ENCODE measurements at regions of chr2 and their contacts with region 1.

Region 1: GRCh38 chr2:134169788-134170187 is 84.1 kb upstream of the MGAT5 start:
- DNase-seq: peak; percentile 45
- H3K4me3 Mint-ChIP-seq: no peak overlapping the region
- H3K27ac Mint-ChIP-seq: no peak overlapping the region
- H3K4me1 Mint-ChIP-seq: peaks cover 68% of the 10 kb centered on the region
- H3K27me3 Mint-ChIP-seq: no peaks in the 10 kb centered on the region

Region 2: DNA sequence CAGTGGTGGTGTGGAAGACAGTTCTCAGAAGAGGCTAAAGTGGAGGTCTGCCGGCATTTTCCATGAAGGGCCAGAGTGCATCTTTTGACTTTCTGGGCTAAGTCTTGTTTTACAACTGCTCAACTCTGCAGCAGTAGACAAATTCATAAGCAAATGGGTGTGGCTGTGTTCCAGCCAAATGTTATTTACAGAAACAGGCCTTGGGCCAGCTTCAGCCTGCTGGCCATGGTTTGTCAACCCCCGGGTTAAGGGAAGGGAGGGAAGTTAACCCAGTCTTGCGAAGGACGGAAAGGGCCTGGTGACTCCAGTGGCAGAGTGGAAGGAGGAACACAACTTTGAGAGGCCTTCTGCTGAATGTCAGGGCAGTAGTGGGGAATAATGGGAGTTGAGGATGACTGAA is 567.3 kb before region 1 on chr2:
- CTCF ChIA-PET with region 1: no interaction called
- intact Hi-C with region 1: no loop called
- DNase-seq: no peak
- H3K4me3 Mint-ChIP-seq: no peak overlapping the region
- H3K27ac Mint-ChIP-seq: no peak overlapping the region
- H3K4me1 Mint-ChIP-seq: no peaks in the 10 kb centered on the region
- H3K27me3 Mint-ChIP-seq: peaks cover 3% of the 10 kb centered on the region

Region 3: DNA sequence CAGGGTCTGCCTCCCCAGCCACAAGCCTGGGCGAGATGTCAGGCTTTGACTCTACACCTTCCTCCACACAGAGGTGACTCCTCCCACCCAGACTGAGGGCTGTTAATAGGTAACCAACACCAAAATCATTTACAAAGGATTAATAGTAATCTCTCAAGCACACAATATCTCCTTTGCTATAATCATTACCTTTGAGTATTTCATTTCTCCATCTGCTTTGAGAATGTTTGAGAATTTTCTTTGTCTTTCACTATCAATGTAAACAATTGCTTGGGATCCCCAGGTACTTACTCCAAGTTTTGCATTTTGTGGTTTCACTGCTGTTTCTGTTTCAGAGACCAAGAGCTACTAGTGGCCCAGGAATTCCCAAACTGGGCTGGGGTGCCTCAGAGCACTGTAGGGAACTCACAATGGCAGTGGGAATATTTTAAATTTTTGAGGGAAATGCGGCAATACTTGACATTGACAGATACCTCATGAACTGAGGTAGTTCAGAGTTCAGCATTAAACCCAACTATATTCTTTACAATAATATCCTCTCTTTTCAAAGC is 82.3 kb before region 1 on chr2:
- CTCF ChIA-PET with region 1: no interaction called
- intact Hi-C with region 1: no loop called
- DNase-seq: no peak
- H3K4me3 Mint-ChIP-seq: no peak overlapping the region
- H3K27ac Mint-ChIP-seq: no peak overlapping the region
- H3K4me1 Mint-ChIP-seq: no peaks in the 10 kb centered on the region
- H3K27me3 Mint-ChIP-seq: peaks cover 3% of the 10 kb centered on the region

Region 4: GRCh38 chr2:134127496-134127895 is 42.3 kb before region 1 on chr2:
- CTCF ChIA-PET with region 1: interaction called, 7 read pairs
- intact Hi-C with region 1: loop called (anchors 2 kb)
- DNase-seq: peak; percentile 84
- H3K4me3 Mint-ChIP-seq: no peak overlapping the region
- H3K27ac Mint-ChIP-seq: no peak overlapping the region
- H3K4me1 Mint-ChIP-seq: peaks cover 61% of the 10 kb centered on the region
- H3K27me3 Mint-ChIP-seq: no peaks in the 10 kb centered on the region

Region 5: GRCh38 chr2:134137182-134137611 is 32.6 kb before region 1 on chr2:
- CTCF ChIA-PET with region 1: no interaction called
- intact Hi-C with region 1: loop called (anchors 2 kb)
- DNase-seq: peak; percentile 41
- H3K4me3 Mint-ChIP-seq: peak overlapping the region; percentile 37
- H3K27ac Mint-ChIP-seq: no peak overlapping the region
- H3K4me1 Mint-ChIP-seq: peaks cover 45% of the 10 kb centered on the region
- H3K27me3 Mint-ChIP-seq: no peaks in the 10 kb centered on the region

Region 6: GRCh38 chr2:134198006-134198634 is 28.3 kb after region 1 on chr2:
- CTCF ChIA-PET with region 1: interaction called, 7 read pairs
- intact Hi-C with region 1: loop called (anchors 1 kb)
- DNase-seq: no peak
- H3K4me3 Mint-ChIP-seq: peak overlapping the region; percentile 15
- H3K27ac Mint-ChIP-seq: peak overlapping the region; percentile 77
- H3K4me1 Mint-ChIP-seq: peaks cover 64% of the 10 kb centered on the region
- H3K27me3 Mint-ChIP-seq: no peaks in the 10 kb centered on the region

Region 7: DNA sequence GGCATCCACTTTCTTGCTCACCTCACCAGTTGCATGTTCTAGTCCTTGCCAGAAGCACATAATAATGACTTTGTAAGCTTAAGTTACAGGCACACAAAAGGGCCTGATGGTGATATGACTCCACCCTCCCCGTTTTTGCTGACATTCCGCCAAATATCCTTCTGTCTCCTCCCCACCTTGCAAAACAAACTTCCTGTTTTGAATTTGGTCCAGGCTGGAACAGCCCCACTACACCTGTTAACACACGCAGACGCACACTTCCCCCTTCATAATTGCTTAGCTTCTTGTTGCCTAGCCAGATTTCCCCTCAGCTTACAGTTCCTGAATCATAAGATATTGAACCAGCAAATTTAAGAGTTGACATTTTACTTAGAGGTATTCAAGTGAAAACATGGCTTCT is 84.0 kb after region 1 on chr2 and contains the start of gene MGAT5:
- CTCF ChIA-PET with region 1: no interaction called
- intact Hi-C with region 1: loop called (anchors 1 kb)
- DNase-seq: no peak
- H3K4me3 Mint-ChIP-seq: no peak within 1 kb of the TSS
- H3K27ac Mint-ChIP-seq: no peak within 1 kb of the TSS
- H3K4me1 Mint-ChIP-seq: peaks cover 82% of the 10 kb centered on the region
- H3K27me3 Mint-ChIP-seq: peaks cover 2% of the 10 kb centered on the region
- total RNA-seq, gene MGAT5: 11.6 to 13.0 TPM

Region 8: DNA sequence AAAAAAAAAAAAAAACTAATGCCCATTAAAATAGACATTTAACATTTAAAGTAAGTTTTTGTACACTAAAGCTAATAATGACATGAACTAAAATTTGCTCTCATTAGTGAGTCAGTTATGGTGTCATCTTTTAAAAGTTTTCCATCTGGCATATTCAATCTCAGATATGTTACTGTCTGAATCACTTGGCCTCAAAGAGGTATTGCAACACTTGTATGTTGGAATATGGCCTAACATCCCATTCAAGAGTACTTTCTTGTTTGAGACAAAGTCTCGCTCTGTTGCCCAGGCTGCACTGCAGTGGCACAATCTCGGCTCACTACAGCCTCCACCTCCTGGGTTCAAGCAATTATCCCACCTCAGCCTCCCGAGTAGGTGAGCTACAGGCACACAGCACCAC is 379.3 kb after region 1 on chr2:
- CTCF ChIA-PET with region 1: no interaction called
- intact Hi-C with region 1: no loop called
- DNase-seq: no peak
- H3K4me3 Mint-ChIP-seq: no peak overlapping the region
- H3K27ac Mint-ChIP-seq: no peak overlapping the region
- H3K4me1 Mint-ChIP-seq: no peaks in the 10 kb centered on the region
- H3K27me3 Mint-ChIP-seq: peaks cover 8% of the 10 kb centered on the region